Endothelial cell of umbilical vein (primary cell): ENCODE measurements at regions of chr7 and their contacts with region 1.

Region 1: GRCh38 chr7:47453093-47454049 is 128.5 kb downstream of the TNS3 start:
- DNase-seq: peak; percentile 74
- H3K4me3 ChIP-seq: peak overlapping the region in 2 of 3 experiments; percentile 38 to 72
- H3K27ac ChIP-seq: peak overlapping the region; percentile 99
- H3K4me1 ChIP-seq: peaks cover 46% of the 10 kb centered on the region
- H3K27me3 ChIP-seq: no peaks in the 10 kb centered on the region
- CTCF ChIP-seq: no peak
- POLR2A ChIP-seq: no peak

Region 2: GRCh38 chr7:47428092-47428767 is 25.1 kb before region 1 on chr7:
- CTCF ChIA-PET with region 1: no interaction called
- POLR2A ChIA-PET with region 1: no interaction called
- dilution Hi-C with region 1: no loop called
- intact Hi-C with region 1: loop called (anchors 2 kb)
- DNase-seq: peak; percentile 74
- H3K4me3 ChIP-seq: no peak overlapping the region
- H3K27ac ChIP-seq: peak overlapping the region; percentile 67
- H3K4me1 ChIP-seq: peaks cover 21% of the 10 kb centered on the region
- H3K27me3 ChIP-seq: no peaks in the 10 kb centered on the region
- CTCF ChIP-seq: no peak
- POLR2A ChIP-seq: no peak

Region 3: DNA sequence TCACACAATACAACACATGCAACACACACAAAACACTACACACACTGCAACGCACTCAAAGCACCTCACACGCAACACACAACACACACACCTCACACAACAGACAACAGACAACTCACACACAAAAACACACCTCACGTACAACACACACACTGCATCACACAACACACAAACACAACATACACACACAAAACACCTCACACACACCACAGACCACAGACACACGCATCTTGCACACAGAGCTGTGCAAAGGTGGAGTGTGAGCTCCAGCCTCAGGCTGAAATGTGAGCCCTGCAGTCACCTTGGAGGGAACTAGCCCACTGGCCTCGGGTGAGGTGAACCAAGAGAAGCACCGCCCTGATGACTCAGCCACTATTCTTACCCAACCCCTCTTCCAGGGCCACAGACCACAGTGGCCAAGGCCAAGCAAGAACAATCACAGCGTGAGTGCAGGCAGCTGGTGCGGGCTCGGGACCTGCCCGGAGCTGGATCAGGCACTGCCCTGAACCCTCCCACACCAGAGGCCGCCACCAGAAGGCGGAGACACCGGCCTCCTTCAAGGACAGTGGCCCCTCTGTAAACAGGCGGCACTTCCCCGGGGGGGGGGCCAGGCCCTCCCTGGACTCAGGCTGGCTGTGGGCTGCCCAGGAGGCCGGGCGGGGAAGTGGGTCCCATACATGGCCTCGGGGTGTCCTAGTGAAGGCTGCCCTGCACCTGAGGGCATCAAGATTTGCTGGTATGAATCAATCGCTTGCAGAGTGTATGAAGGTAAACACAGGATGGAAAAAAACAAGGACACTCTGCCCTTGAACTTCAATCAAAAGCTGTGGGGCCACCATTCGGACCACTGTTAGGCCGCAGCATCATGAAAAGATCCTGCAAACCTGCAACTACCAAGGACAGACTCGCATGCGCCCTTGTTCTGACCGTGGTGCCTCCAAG is 21.8 kb after region 1 on chr7:
- CTCF ChIA-PET with region 1: interaction called, 5 read pairs
- POLR2A ChIA-PET with region 1: no interaction called
- dilution Hi-C with region 1: no loop called
- intact Hi-C with region 1: loop called (anchors 1 kb)
- DNase-seq: peak; percentile 54
- H3K4me3 ChIP-seq: no peak overlapping the region
- H3K27ac ChIP-seq: no peak overlapping the region
- H3K4me1 ChIP-seq: peaks cover 12% of the 10 kb centered on the region
- H3K27me3 ChIP-seq: no peaks in the 10 kb centered on the region
- CTCF ChIP-seq: no peak
- POLR2A ChIP-seq: no peak

Region 4: GRCh38 chr7:47482013-47482875 is 28.9 kb after region 1 on chr7:
- CTCF ChIA-PET with region 1: interaction called, 6 read pairs
- POLR2A ChIA-PET with region 1: interaction called, 3 read pairs
- dilution Hi-C with region 1: no loop called
- intact Hi-C with region 1: loop called (anchors 1 kb)
- DNase-seq: peak; percentile 83
- H3K4me3 ChIP-seq: no peak overlapping the region
- H3K27ac ChIP-seq: peak overlapping the region; percentile 89
- H3K4me1 ChIP-seq: peaks cover 16% of the 10 kb centered on the region
- H3K27me3 ChIP-seq: no peaks in the 10 kb centered on the region
- CTCF ChIP-seq: no peak
- POLR2A ChIP-seq: peak; percentile 49

Region 5: DNA sequence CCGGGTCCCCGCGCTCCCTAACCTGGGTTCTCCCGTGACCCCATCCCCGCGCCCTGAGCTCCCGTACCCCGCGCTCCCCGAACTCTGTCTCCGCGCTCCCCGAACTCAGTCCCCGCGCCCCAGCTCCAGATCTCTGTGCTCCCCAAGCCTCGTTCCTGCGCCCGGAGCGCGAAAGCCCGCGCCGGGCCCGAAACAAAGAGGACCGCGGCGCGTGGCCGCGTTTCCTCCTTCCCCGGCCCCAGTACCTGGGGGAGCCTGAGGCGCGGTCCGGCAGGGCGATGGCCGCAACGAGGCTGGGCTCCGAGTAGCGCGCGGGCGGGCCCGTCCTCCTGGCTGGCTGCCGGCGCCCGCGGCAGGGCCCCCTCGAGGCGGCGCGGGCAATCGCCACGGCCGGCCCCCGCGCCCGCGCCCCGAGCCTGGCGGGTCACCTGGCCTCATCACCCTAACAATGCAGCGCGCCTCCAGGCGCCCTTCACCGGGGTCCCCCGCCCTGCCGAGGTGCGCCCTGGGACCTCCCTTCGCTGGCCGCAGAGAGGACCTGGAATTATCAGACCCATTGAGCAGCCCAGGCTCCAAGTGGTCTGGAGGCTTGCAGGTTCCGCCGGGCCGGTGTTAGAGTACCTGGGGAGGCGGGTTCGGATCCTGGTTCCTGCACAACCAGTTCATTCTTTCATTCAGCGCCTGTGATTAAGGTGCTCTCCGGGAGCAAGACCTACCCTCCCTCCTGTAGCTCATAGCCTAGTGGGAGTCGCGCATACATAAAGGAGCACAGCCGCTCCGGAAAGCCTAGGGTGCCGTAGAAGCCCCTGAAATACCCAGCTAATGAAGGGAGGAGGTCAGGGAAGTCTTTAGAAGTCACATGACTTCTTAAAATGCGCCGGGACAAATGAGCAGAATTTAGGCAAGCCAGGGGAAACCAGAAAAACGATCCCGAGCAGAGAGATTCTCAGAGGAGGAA is 128.7 kb after region 1 on chr7 and contains the start of gene TNS3:
- CTCF ChIA-PET with region 1: interaction called, 4 read pairs
- POLR2A ChIA-PET with region 1: no interaction called
- dilution Hi-C with region 1: no loop called
- intact Hi-C with region 1: loop called (anchors 2 kb)
- DNase-seq: no peak
- H3K4me3 ChIP-seq: peak within 1 kb of the TSS; percentile 56 to 74 (median 69)
- H3K27ac ChIP-seq: no peak within 1 kb of the TSS
- H3K4me1 ChIP-seq: peaks cover 18% of the 10 kb centered on the region
- H3K27me3 ChIP-seq: peaks cover 6 to 8% of the 10 kb centered on the region in 2 experiments
- CTCF ChIP-seq: peak; percentile 7 to 17
- POLR2A ChIP-seq: no peak
- total RNA-seq, gene TNS3: 45.1 and 59.8 TPM in 2 replicates

Region 6: DNA sequence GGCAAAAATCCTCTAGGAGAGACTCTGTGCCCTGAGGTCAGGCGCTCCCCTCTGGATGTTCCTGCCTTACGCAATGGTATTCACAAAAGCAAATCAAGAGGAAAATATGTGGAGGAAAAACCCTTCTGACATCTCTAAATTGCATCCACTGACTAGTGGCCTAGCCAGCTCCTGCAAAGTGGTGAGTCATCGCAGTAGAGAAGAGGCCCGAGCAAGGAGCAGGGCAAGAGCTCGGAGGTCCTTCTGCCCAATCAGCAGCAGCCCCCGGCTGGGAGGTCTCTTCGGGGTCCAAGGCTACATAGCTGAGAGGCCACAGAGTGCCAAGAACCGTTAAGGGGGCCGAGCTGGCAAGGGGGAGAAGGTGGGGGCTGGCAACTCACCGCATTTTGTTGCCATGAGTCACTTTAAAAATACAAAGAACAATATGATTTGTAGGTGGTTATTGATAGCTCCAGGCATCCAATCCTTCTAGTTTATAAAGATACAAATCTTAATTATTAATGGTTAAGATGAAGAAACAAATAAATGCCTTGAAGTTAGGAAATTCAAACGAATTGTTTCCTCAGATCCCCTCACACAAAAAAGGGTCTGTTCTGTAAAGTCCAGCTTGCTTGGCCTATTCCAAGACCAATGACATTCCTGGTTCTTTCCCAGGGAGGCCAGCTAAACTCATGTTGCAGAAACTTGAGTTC is 333.3 kb after region 1 on chr7:
- CTCF ChIA-PET with region 1: no interaction called
- POLR2A ChIA-PET with region 1: no interaction called
- dilution Hi-C with region 1: no loop called
- intact Hi-C with region 1: loop called (anchors 1 kb)
- DNase-seq: peak; percentile 98
- H3K4me3 ChIP-seq: no peak overlapping the region
- H3K27ac ChIP-seq: peak overlapping the region; percentile 100
- H3K4me1 ChIP-seq: peaks cover 51% of the 10 kb centered on the region
- H3K27me3 ChIP-seq: no peaks in the 10 kb centered on the region
- CTCF ChIP-seq: no peak
- POLR2A ChIP-seq: no peak

Region 7: DNA sequence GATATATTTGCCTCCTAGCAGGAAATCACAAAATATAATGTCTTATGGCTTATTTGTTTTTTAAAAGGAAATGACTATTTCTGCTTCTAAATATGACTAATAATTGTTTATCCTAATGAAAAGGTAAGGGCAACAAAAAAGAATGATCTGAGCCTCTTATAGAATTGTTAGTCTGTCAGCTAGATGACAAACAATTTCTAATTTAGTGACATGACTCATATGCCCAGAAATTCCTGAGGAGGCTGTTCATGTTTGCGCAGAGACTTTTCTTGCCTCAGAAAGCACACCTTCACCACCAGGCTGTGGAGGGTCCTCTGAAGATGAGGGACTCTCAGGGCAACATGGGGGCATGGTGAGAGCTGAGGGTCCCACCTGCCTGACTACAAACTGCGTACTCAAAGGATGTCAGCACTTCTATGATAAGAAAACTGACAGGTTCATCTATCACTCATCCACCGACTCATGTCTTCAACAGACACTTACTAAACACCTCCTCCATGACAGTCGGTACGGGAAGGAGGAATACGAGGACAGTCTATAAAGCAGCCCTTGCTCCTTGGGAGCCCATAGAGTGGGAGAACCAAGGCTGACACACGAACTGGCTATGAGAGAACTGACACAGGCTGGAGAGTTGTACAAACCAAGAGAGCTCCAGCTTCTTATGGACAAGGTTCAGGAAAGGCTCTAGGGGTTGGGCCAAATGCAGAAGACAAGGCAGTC is 392.9 kb after region 1 on chr7:
- CTCF ChIA-PET with region 1: no interaction called
- POLR2A ChIA-PET with region 1: no interaction called
- dilution Hi-C with region 1: no loop called
- intact Hi-C with region 1: no loop called
- DNase-seq: peak; percentile 66
- H3K4me3 ChIP-seq: no peak overlapping the region
- H3K27ac ChIP-seq: peak overlapping the region; percentile 83
- H3K4me1 ChIP-seq: peaks cover 27% of the 10 kb centered on the region
- H3K27me3 ChIP-seq: no peaks in the 10 kb centered on the region
- CTCF ChIP-seq: no peak
- POLR2A ChIP-seq: no peak